Esophagus squamous epithelium (tissue), 5 donors: ENCODE measurements at regions of chr10 and their contacts with region 1.

Region 1: GRCh38 chr10:30392564-30392990 is 41.4 kb upstream of the MAP3K8 start:
- DNase-seq: no peak
- H3K4me3 ChIP-seq: peak overlapping the region in 1 of 4 donors; percentile 51
- H3K27ac ChIP-seq: no peak overlapping the region
- H3K4me1 ChIP-seq: peaks cover 0 to 8% (median 4%) of the 10 kb centered on the region in 3 donors
- H3K27me3 ChIP-seq: peaks cover 0 to 10% (median 0%) of the 10 kb centered on the region in 4 donors
- CTCF ChIP-seq: peak; percentile 84 to 94 (median 87)
- POLR2A ChIP-seq: no peak

Region 2: GRCh38 chr10:29658984-29659965 is 733.3 kb before region 1 on chr10:
- intact Hi-C with region 1: no loop called
- DNase-seq: no peak
- H3K4me3 ChIP-seq: no peak overlapping the region
- H3K27ac ChIP-seq: peak overlapping the region; percentile 70 to 88 (median 84)
- H3K4me1 ChIP-seq: peaks cover 34 to 61% (median 47%) of the 10 kb centered on the region in 3 donors
- H3K27me3 ChIP-seq: no peaks in the 10 kb centered on the region
- CTCF ChIP-seq: peak in 4 of 6 experiments; percentile 48 to 78 (median 74)
- POLR2A ChIP-seq: no peak

Region 3: DNA sequence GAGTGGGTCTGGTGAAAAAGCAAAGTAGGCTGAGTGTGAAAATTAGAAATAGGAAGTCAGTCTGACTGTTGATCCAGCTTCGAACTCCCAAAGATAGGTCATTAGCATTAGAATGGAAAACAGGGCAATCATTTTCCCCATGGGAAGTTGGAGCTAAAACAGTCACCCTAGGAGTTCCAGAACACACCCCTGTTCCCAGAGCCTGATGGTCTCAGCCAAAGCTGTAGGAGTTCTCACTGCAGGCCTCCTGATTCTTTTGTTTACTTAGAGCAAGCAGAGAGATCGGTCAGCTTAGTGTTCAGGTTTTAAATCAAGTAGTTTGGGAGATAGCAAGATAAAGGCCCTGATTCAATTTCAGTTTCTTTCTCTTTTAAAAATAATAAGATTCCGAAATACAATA is 304.4 kb before region 1 on chr10:
- intact Hi-C with region 1: no loop called
- DNase-seq: no peak
- H3K4me3 ChIP-seq: no peak overlapping the region
- H3K27ac ChIP-seq: no peak overlapping the region
- H3K4me1 ChIP-seq: no peaks in the 10 kb centered on the region
- H3K27me3 ChIP-seq: no peaks in the 10 kb centered on the region
- CTCF ChIP-seq: no peak
- POLR2A ChIP-seq: no peak

Region 4: DNA sequence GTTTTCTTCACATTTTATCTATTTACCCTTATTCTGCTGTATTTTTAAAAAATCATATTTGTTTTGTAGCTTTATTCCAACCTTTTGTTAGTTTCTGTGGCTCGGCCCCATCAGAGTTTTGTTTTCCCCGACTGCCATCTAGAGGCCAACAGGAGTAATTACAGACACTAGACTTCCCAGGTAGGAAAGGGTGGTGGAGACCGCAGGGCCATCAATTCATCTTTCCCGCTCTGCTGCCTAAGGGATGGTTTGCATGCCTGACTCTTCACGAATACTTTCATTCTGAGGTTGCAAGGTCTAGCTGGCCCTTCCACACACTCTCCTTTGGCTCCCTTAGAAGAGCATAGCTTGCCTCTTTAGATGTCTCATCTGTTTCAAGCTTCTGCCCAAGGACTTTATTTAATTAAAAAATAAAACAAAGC is 198.7 kb after region 1 on chr10:
- intact Hi-C with region 1: loop called (anchors 5 kb)
- DNase-seq: no peak
- H3K4me3 ChIP-seq: no peak overlapping the region
- H3K27ac ChIP-seq: no peak overlapping the region
- H3K4me1 ChIP-seq: peaks cover 0 to 3% (median 0%) of the 10 kb centered on the region in 3 donors
- H3K27me3 ChIP-seq: no peaks in the 10 kb centered on the region
- CTCF ChIP-seq: peak; percentile 59 to 89 (median 82)
- POLR2A ChIP-seq: no peak